ENCODE measurements at regions of chr1 and their contacts with region 1.

Region 1: GRCh38 chr1:25232027-25232865 is at the start of gene SYF2:
- H3K4me3 Mint-ChIP-seq: no peak within 1 kb of the TSS
- H3K27ac Mint-ChIP-seq: no peak within 1 kb of the TSS
- H3K4me1 Mint-ChIP-seq: peaks cover 37% of the 10 kb centered on the region
- H3K27me3 Mint-ChIP-seq: no peaks in the 10 kb centered on the region

Region 2: GRCh38 chr1:24642481-24643361 is 589.5 kb before region 1 on chr1 and contains the start of gene SRRM1:
- intact Hi-C with region 1: loop called (anchors 2 kb)
- H3K4me3 Mint-ChIP-seq: peak within 1 kb of the TSS; percentile 82
- H3K27ac Mint-ChIP-seq: peak within 1 kb of the TSS; percentile 90
- H3K4me1 Mint-ChIP-seq: peaks cover 47% of the 10 kb centered on the region
- H3K27me3 Mint-ChIP-seq: no peaks in the 10 kb centered on the region

Region 3: DNA sequence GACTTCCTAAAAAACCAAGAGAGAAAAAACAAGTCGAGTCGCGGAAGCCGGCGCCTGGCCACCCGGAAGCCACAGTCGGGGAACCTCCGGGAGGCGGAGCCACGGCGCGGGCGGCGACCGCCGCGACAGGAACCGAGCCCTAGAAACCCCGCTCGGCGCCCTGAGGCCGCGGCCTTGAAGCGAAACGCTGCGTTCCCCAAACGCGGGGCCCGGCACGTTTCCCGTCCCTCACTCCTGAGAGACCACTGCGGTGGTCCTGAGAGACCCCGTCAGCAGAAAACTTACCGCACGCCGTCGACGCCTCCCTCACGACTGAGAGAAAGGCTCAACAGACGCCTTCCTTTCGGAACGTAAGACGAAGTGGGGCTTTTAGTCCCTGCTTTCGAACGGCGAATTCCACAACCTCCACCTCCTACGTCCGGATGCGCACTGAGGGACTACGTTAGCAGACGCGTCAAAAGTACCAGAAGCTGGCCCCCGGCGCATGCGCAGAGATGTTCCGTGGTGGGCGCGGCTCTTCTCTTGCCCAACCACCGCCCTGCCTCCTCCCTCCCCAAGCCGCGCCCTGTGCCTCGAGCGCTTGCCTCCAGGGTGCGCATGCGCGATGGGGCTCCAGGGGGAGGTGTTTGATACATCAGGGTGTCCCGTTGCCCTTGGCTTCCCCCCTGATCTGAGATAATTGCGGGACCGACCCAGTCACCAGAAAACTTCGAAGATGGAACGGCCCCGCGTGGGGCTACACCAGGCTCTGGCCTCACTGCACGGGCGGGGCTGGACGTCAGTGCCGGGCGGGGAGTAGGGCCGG is 15.0 kb after region 1 on chr1 and contains the start of gene RSRP1:
- intact Hi-C with region 1: loop called (anchors 2 kb)
- H3K4me3 Mint-ChIP-seq: peak within 1 kb of the TSS; percentile 96
- H3K27ac Mint-ChIP-seq: peak within 1 kb of the TSS; percentile 97
- H3K4me1 Mint-ChIP-seq: peaks cover 48% of the 10 kb centered on the region
- H3K27me3 Mint-ChIP-seq: no peaks in the 10 kb centered on the region

Region 4: GRCh38 chr1:25487628-25488027 is 255.4 kb after region 1 on chr1:
- intact Hi-C with region 1: no loop called
- H3K4me3 Mint-ChIP-seq: no peak overlapping the region
- H3K27ac Mint-ChIP-seq: no peak overlapping the region
- H3K4me1 Mint-ChIP-seq: peaks cover 6% of the 10 kb centered on the region
- H3K27me3 Mint-ChIP-seq: no peaks in the 10 kb centered on the region